Lower leg skin (tissue), 4 donors: ENCODE measurements at regions of chr2 and their contacts with region 1.

Region 1: DNA sequence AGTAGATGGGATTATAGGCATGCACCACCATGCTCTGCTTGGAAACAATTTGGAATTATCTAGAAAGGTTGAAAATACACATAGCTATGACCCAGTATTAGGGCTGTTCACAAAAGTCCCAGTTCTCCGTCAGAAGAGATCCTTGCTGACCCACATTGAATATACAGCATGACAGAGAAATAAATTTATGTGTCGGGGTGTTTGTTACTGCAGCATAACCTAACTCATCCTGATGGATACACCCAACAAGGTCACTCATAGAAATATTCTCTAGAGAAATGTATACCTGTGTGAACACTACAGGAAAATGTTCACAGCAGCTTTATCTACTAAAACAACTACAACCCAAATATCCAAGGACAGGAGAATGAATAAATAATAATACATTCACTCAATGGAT is 9.0 kb downstream of the TBC1D8 start:
- DNase-seq: no peak
- H3K4me3 ChIP-seq: no peak overlapping the region
- CTCF ChIP-seq: no peak
- POLR2A ChIP-seq: no peak

Region 2: DNA sequence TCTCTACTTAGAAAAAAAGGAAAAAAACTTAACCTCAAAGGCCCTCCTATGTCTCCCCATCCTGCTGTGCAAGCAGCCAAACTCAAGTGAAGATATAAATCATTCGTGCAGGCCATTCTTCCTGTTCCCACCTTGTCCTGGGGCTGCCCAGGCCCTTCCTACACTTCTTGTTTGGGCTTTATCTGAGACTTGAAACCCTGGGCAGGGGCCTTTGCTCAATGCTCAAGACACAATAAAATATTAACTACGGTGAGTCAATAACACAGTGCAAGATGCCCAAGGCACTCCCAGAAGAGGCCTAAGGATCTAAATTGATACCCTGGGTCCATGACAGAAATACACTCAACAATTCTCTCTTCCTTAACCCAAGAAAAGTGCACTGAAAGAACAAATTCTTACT is 58.5 kb before region 1 on chr2:
- intact Hi-C with region 1: loop called (anchors 2 kb)
- DNase-seq: no peak
- H3K4me3 ChIP-seq: no peak overlapping the region
- CTCF ChIP-seq: no peak
- POLR2A ChIP-seq: no peak